MCF 10A (cell line): ENCODE measurements at regions of chr6 and their contacts with region 1.

Region 1: GRCh38 chr6:90216072-90216977 is 80.3 kb downstream of the BACH2 start:
- DNase-seq: peak; percentile 24
- H3K4me3 Mint-ChIP-seq: no peak overlapping the region
- H3K27ac Mint-ChIP-seq: no peak overlapping the region
- H3K4me1 Mint-ChIP-seq: no peaks in the 10 kb centered on the region
- H3K27me3 Mint-ChIP-seq: no peaks in the 10 kb centered on the region
- CTCF ChIP-seq: no peak

Region 2: GRCh38 chr6:89984926-89985750 is 231.2 kb before region 1 on chr6:
- CTCF ChIA-PET with region 1: no interaction called
- POLR2A ChIA-PET with region 1: no interaction called
- intact Hi-C with region 1: no loop called
- DNase-seq: peak; percentile 33
- H3K4me3 Mint-ChIP-seq: no peak overlapping the region
- H3K27ac Mint-ChIP-seq: no peak overlapping the region
- H3K4me1 Mint-ChIP-seq: peaks cover 13% of the 10 kb centered on the region
- H3K27me3 Mint-ChIP-seq: no peaks in the 10 kb centered on the region
- CTCF ChIP-seq: no peak

Region 3: GRCh38 chr6:89999154-89999553 is 217.2 kb before region 1 on chr6:
- CTCF ChIA-PET with region 1: no interaction called
- POLR2A ChIA-PET with region 1: interaction called, 10 read pairs
- intact Hi-C with region 1: no loop called
- DNase-seq: peak; percentile 95
- H3K4me3 Mint-ChIP-seq: no peak overlapping the region
- H3K27ac Mint-ChIP-seq: no peak overlapping the region
- H3K4me1 Mint-ChIP-seq: peaks cover 13% of the 10 kb centered on the region
- H3K27me3 Mint-ChIP-seq: no peaks in the 10 kb centered on the region
- CTCF ChIP-seq: no peak

Region 4: GRCh38 chr6:90098001-90098531 is 118.3 kb before region 1 on chr6:
- CTCF ChIA-PET with region 1: interaction called, 4 read pairs
- POLR2A ChIA-PET with region 1: interaction called, 24 read pairs
- intact Hi-C with region 1: loop called (anchors 1 kb)
- DNase-seq: peak; percentile 97
- H3K4me3 Mint-ChIP-seq: no peak overlapping the region
- H3K27ac Mint-ChIP-seq: peak overlapping the region; percentile 96
- H3K4me1 Mint-ChIP-seq: peaks cover 43% of the 10 kb centered on the region
- H3K27me3 Mint-ChIP-seq: no peaks in the 10 kb centered on the region
- CTCF ChIP-seq: peak; percentile 40

Region 5: GRCh38 chr6:90184334-90185298 is 31.7 kb before region 1 on chr6:
- CTCF ChIA-PET with region 1: interaction called, 3 read pairs
- POLR2A ChIA-PET with region 1: interaction called, 14 read pairs
- intact Hi-C with region 1: no loop called
- DNase-seq: peak; percentile 38
- H3K4me3 Mint-ChIP-seq: no peak overlapping the region
- H3K27ac Mint-ChIP-seq: no peak overlapping the region
- H3K4me1 Mint-ChIP-seq: peaks cover 21% of the 10 kb centered on the region
- H3K27me3 Mint-ChIP-seq: no peaks in the 10 kb centered on the region
- CTCF ChIP-seq: no peak

Region 6: GRCh38 chr6:90204327-90205056 is 11.8 kb before region 1 on chr6:
- CTCF ChIA-PET with region 1: interaction called, 5 read pairs
- POLR2A ChIA-PET with region 1: interaction called, 25 read pairs
- intact Hi-C with region 1: no loop called
- DNase-seq: peak; percentile 20
- H3K4me3 Mint-ChIP-seq: no peak overlapping the region
- H3K27ac Mint-ChIP-seq: no peak overlapping the region
- H3K4me1 Mint-ChIP-seq: peaks cover 8% of the 10 kb centered on the region
- H3K27me3 Mint-ChIP-seq: no peaks in the 10 kb centered on the region
- CTCF ChIP-seq: no peak

Region 7: DNA sequence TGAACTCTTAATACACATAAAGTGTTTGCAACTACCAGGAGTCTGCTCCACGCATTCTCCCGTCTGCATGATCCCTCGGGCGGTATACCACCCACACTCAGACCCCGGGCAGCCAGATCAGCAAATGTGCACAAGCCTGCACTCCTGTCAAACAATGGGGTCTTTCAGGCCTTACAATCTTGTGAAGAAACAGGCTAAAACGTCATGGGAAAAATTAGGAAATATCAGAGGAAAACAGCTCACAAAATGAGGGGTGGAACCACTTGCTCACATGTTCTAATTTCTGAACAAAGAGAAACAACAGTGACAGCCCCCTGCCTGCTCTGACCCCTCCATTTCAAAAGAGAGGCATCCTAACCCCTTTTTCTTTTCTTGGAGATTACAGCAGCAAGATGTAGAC is 10.9 kb after region 1 on chr6:
- CTCF ChIA-PET with region 1: interaction called, 3 read pairs
- POLR2A ChIA-PET with region 1: interaction called, 10 read pairs
- intact Hi-C with region 1: no loop called
- DNase-seq: no peak
- H3K4me3 Mint-ChIP-seq: no peak overlapping the region
- H3K27ac Mint-ChIP-seq: no peak overlapping the region
- H3K4me1 Mint-ChIP-seq: peaks cover 14% of the 10 kb centered on the region
- H3K27me3 Mint-ChIP-seq: no peaks in the 10 kb centered on the region
- CTCF ChIP-seq: no peak

Region 8: DNA sequence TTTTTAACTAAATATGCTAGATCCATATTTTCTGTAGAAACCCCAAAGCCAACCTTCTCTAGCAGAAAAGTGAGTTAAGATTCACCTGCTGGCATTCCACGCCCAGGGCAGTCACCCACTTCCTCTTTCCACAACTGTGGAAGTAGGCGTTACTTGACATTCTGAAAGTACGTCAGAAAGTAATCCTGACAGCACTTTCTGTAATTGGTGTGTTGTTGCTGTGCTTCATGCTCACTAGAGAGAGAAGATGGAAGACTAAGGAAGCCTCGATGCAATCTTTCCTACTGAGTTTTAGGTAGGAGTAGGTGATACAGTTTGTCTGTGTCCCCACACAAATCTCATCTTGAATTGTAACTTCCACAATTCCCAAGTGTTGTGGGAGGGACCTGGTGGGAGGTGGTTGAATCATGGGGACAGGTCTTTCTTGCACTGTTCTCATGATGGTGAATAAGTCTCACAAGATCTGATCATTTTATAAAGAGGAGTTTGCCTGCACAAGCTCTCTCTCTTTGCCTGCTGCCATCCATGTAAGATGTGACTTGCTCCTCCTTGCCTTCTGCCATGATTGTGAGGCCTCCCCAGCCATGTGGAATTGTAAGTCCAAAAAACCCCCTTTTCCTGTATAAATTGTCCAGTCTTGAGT is 269.4 kb after region 1 on chr6:
- CTCF ChIA-PET with region 1: no interaction called
- POLR2A ChIA-PET with region 1: no interaction called
- intact Hi-C with region 1: no loop called
- DNase-seq: no peak
- H3K4me3 Mint-ChIP-seq: no peak overlapping the region
- H3K27ac Mint-ChIP-seq: no peak overlapping the region
- H3K4me1 Mint-ChIP-seq: peaks cover 7% of the 10 kb centered on the region
- H3K27me3 Mint-ChIP-seq: no peaks in the 10 kb centered on the region
- CTCF ChIP-seq: no peak